ENCODE measurements at regions of chr16 and their contacts with region 1.

Region 1: GRCh38 chr16:52433643-52434042 is 113.3 kb downstream of the TOX3 start:
- DNase-seq: no peak
- ATAC-seq: no peak
- H3K4me3 ChIP-seq: no peak overlapping the region
- H3K27ac ChIP-seq: no peak overlapping the region
- H3K4me1 ChIP-seq: no peaks in the 10 kb centered on the region
- H3K27me3 ChIP-seq: no peaks in the 10 kb centered on the region
- CTCF ChIP-seq: no peak
- EP300 ChIP-seq: no peak
- POLR2A ChIP-seq: no peak
- RAD21 ChIP-seq: no peak

Region 2: GRCh38 chr16:52191531-52192134 is 242.0 kb before region 1 on chr16:
- CTCF ChIA-PET with region 1: no interaction called
- POLR2A ChIA-PET with region 1: no interaction called
- in situ Hi-C with region 1: no loop called
- intact Hi-C with region 1: loop called (anchors 5 kb)
- DNase-seq: peak; percentile 76
- ATAC-seq: peak; percentile 74
- H3K4me3 ChIP-seq: no peak overlapping the region
- H3K27ac ChIP-seq: no peak overlapping the region
- H3K4me1 ChIP-seq: peaks cover 9% of the 10 kb centered on the region
- H3K27me3 ChIP-seq: no peaks in the 10 kb centered on the region
- CTCF ChIP-seq: peak; percentile 97
- EP300 ChIP-seq: no peak
- POLR2A ChIP-seq: no peak
- RAD21 ChIP-seq: peak; percentile 90

Measured in HepG2 (cell line).